GM12878 (cell line): ENCODE measurements at regions of chr5 and their contacts with region 1.

Region 1: DNA sequence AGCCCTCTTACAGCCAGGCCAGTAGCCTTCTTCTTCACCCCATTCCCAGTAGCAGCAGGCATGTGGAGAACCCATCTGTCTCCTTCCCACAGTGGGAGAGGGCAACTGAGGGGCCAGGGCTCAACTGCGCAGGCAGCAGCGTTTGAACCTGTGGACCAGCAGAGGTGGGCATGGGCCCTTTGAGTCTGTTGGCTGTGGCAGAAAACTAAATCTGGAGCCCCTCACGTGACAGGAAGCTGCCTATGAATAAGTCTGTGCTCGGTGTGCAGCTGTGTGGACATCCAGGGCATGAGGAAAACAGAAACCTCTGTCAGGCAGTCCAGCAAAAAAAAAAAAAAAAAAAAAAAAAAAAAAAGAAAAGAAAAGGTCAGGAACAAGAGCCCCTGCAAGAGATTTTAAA is 189.2 kb upstream of the NR3C1 start:
- DNase-seq: no peak
- ATAC-seq: peak; percentile 81
- H3K4me3 ChIP-seq: no peak overlapping the region
- H3K27ac ChIP-seq: peak overlapping the region; percentile 57
- H3K4me1 ChIP-seq: peaks cover 33% of the 10 kb centered on the region
- H3K27me3 ChIP-seq: no peaks in the 10 kb centered on the region
- CTCF ChIP-seq: no peak
- EP300 ChIP-seq: peak; percentile 16 to 56; a peak in 1 of 4 replicates
- POLR2A ChIP-seq: no peak
- RAD21 ChIP-seq: no peak

Region 2: DNA sequence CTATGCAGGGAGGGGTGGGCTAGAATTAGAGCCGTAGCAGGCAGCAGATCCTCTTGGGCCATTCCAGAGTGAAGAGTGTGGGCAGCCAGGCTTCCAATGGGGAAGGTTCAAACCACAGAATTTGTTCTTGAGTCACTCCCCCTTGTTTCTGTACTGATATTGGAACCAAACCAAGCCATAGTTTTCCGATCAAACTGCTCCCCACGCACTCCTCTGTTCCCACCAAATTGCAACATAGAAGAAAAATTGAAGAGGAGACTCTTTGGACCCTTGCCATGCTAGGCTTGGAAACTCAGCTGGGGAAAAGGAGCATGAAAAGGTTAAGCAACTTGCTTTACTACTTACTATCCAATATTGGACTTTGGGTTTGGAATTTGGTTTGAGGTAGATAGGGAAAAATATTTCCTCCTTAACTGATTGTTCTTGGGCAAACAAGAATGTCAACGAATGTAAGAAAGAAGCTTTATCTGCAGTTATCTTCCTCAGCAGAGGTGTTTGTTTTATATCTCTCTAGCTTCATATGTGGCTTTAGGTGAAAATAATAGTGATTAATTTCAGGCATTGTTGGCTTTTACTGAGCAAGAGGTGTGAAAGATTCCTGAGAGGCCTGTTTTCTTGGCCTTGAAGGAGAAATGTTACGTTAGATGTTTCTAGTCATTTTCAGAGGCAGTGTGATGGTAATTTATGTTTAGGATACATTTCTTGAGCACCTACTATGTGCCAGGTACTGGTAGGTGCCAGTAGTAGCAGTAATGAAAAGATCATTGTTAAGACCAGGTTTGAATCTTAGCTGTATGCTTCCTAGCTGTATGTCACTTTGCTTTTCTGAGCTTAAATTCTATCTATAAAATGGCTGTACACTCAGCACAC is 23.2 kb before region 1 on chr5:
- CTCF ChIA-PET with region 1: interaction called, 19 read pairs
- POLR2A ChIA-PET with region 1: interaction called, 3 read pairs
- RAD21 ChIA-PET with region 1: interaction called, 12 read pairs
- SMC1A ChIA-PET with region 1: interaction called, 56 read pairs
- in situ Hi-C with region 1: no loop called
- intact Hi-C with region 1: loop called (anchors 2 kb)
- DNase-seq: no peak
- ATAC-seq: no peak
- H3K4me3 ChIP-seq: no peak overlapping the region
- H3K27ac ChIP-seq: no peak overlapping the region
- H3K4me1 ChIP-seq: peaks cover 9% of the 10 kb centered on the region
- H3K27me3 ChIP-seq: no peaks in the 10 kb centered on the region
- CTCF ChIP-seq: no peak
- EP300 ChIP-seq: no peak
- POLR2A ChIP-seq: no peak
- RAD21 ChIP-seq: no peak

Region 3: GRCh38 chr5:143576711-143577484 is 15.8 kb before region 1 on chr5:
- CTCF ChIA-PET with region 1: interaction called, 19 read pairs
- POLR2A ChIA-PET with region 1: interaction called, 9 read pairs
- RAD21 ChIA-PET with region 1: interaction called, 26 read pairs
- SMC1A ChIA-PET with region 1: interaction called, 56 read pairs
- in situ Hi-C with region 1: no loop called
- intact Hi-C with region 1: no loop called
- DNase-seq: no peak
- ATAC-seq: no peak
- H3K4me3 ChIP-seq: no peak overlapping the region
- H3K27ac ChIP-seq: no peak overlapping the region
- H3K4me1 ChIP-seq: peaks cover 3% of the 10 kb centered on the region; the same call in 1 of the 2 replicates
- H3K27me3 ChIP-seq: no peaks in the 10 kb centered on the region
- CTCF ChIP-seq: no peak
- EP300 ChIP-seq: no peak
- POLR2A ChIP-seq: no peak
- RAD21 ChIP-seq: no peak